ENCODE measurements at regions of chrX and their contacts with region 1.

Region 1: GRCh38 chrX:19334945-19335626 is 8.6 kb upstream of the PDHA1 start:
- DNase-seq: no peak
- H3K4me3 ChIP-seq: no peak overlapping the region
- H3K27ac ChIP-seq: no peak overlapping the region
- H3K4me1 ChIP-seq: no peaks in the 10 kb centered on the region
- H3K27me3 ChIP-seq: no peaks in the 10 kb centered on the region
- CTCF ChIP-seq: peak in 4 of 11 experiments; percentile 16 to 47 (median 34)
- POLR2A ChIP-seq: no peak

Region 2: GRCh38 chrX:18390941-18391538 is 944.0 kb before region 1 on chrX:
- intact Hi-C with region 1: loop called (anchors 5 kb)
- DNase-seq: peak; percentile 89
- H3K4me3 ChIP-seq: no peak overlapping the region
- H3K27ac ChIP-seq: no peak overlapping the region
- H3K4me1 ChIP-seq: no peaks in the 10 kb centered on the region
- H3K27me3 ChIP-seq: no peaks in the 10 kb centered on the region
- CTCF ChIP-seq: peak; percentile 44 to 87 (median 67)
- POLR2A ChIP-seq: no peak

Region 3: DNA sequence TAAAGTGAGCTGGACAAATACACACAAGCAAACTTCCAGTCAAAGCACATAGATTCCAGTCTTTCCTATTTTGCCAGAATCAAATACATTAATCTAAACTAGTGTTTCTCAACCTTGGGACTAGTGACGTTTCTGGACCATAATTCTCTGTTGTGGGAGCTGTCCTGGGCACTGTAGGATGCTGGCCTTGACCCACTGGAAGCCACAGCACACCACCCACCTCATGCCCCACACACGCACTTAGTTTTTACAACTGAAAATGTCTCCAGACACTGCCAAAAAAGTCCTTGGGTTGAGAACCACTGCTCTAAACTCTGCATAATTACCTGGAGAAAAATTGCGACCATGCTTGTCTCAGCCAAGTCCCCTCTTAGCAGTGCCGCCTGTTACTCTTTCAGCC is 122.6 kb after region 1 on chrX:
- intact Hi-C with region 1: no loop called
- DNase-seq: no peak
- H3K4me3 ChIP-seq: no peak overlapping the region
- H3K27ac ChIP-seq: no peak overlapping the region
- H3K4me1 ChIP-seq: no peaks in the 10 kb centered on the region
- H3K27me3 ChIP-seq: no peaks in the 10 kb centered on the region
- CTCF ChIP-seq: no peak
- POLR2A ChIP-seq: no peak